ENCODE measurements at regions of chr18 and their contacts with region 1.

Region 1: GRCh38 chr18:11947214-11948191 is 33.8 kb upstream of the IMPA2 start:
- DNase-seq: peak; percentile 26 to 89 (median 78)
- H3K4me3 ChIP-seq: peak overlapping the region; percentile 40 to 79 (median 61)
- H3K27ac ChIP-seq: peak overlapping the region in 57 of 59 donors; percentile 10 to 96 (median 83)
- H3K27me3 ChIP-seq: no peaks in the 10 kb centered on the region
- CTCF ChIP-seq: peak in 15 of 56 donors; percentile 6 to 38 (median 16)

Region 2: DNA sequence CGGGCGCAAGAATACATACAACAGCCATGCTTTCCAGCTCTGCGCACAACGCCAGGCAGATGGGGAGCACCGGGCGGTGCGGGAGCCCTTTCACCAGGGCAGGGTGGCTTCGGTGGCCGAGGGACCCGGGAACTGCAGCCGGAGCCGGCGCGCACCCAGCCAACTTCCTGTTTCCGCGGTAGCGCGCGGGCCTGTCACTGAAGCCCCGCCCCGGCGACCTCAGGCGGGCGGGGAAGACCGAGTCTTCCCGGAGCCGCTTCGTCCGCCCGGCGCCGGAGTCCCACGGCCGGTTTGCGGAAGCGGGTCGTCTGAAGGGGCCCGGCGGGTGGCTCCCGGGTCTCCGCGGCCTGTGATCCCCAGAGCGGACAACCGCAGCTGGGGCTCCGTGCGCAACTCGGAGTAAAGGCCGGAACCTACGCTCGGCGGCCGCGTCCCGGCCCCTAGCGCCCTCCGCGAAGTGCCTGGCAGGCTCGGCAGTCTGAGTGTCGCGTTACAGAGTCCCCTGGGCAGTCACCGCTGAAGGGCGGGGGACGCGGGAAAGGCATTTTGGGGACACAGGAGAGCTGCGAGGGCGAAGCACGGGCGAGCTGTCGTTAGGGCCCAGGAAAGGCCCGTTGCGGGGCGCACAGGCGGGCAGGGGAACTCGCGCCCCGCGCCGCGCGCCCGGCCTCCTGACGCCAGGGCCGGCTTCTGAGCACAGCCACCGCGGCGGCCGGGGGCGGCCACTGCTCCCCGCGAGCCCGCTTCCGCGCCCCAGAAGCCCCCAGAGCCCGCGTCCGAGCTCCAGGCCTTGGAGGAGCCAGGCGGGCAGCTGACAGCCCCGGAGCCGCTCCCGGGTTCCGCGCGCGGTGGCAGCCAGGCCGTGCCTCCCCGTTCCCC is 39.1 kb before region 1 on chr18 and contains the start of gene MPPE1:
- intact Hi-C with region 1: no loop called
- DNase-seq: peak; percentile 73 to 91 (median 87)
- H3K4me3 ChIP-seq: peak within 1 kb of the TSS; percentile 46 to 94 (median 85)
- H3K27ac ChIP-seq: peak within 1 kb of the TSS; percentile 87 to 100 (median 98)
- H3K27me3 ChIP-seq: no peaks in the 10 kb centered on the region
- CTCF ChIP-seq: peak in 23 of 56 donors; percentile 2 to 53 (median 24)
- total RNA-seq, gene MPPE1: 28.8 to 68.7 (median 48.6) TPM

Region 3: DNA sequence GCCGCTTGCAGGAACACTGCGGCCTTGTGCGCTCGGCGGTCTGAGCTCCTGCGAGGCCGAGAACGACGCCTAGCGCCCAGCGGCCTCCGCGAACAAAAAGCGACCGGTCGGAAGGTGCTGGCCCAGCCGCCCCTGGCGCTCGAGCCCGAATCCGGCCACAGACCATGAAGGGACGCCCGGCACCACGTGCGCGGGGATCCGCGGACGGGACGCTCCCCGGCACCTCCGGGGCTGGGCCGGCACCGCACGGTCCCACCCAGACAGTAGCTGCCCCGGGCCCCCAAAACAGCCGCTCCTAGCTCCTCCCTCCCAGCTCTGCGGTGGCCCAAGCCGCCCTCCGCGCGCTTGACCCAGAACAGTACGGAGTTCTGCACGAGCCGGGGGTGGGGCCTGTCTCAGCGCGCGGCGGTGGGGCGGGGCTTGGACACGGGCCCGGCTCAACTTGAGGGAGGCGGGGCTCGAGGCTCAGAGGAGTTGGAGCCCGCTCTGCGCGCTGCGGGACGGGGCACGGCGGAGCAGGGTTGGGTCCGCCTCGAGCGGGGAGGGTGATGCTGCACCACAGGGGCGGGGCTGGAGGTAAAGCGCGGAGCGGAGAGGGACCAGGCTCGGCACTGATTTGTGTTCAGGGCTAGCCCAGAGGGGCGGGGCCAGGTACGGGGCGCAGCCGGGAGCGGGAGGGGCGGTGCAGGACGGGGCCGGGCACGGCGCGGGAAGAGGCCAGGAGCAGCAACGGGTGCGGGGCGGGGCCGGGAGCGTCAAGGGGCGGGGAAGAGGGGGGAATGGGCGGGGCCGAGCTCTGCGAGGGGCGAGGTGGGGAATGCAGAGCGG is 33.3 kb after region 1 on chr18:
- intact Hi-C with region 1: loop called in 1 of 2 experiments (anchors 5 kb)
- DNase-seq: peak; percentile 70 to 88 (median 78)
- H3K4me3 ChIP-seq: peak overlapping the region; percentile 56 to 90 (median 74)
- H3K27ac ChIP-seq: peak overlapping the region in 57 of 59 donors; percentile 13 to 90 (median 76)
- H3K27me3 ChIP-seq: peaks cover 0 to 14% (median 0%) of the 10 kb centered on the region in 45 donors
- CTCF ChIP-seq: peak in 18 of 56 donors; percentile 8 to 42 (median 23)

Region 4: DNA sequence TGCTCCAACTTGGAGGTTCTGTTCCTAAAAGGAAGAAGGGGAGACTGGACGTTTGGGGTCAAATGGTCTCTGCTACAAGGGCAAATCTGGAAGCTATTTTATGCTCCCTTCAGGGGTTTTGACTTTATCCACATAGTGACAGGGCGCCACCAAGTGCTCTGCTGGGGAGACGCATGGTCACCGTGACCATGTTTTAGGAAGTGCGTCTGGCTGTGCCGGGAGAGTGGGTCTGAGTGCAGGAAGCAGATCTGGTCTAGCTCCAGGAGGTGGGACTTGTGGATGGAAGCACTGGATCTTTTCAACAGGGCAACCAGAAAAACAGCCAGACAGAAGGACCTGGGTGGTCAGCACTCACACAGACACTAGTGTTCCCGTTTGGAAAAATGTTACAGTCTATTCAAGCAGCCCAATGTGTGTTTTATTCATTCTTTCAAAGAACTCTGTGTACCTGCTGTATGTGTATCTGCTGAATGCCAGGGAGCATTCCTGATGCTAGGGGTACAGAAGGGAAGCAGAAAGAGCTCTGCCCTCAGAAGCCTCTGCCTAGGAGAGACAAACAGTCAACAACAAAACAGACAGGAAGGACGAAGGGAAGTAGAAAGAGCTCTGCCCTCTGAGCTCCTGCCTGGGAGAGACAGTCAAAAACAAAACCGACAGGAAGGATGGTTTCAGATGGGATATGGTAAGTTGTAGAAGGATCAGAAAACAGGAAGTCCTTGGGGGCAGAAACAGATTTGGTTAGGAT is 48.1 kb after region 1 on chr18:
- intact Hi-C with region 1: loop called in 1 of 2 experiments (anchors 5 kb)
- DNase-seq: peak in 6 of 10 donors; percentile 54 to 69 (median 61)
- H3K4me3 ChIP-seq: peak overlapping the region in 1 of 59 donors; percentile 13
- H3K27ac ChIP-seq: peak overlapping the region in 15 of 59 donors; percentile 1 to 59 (median 29)
- H3K27me3 ChIP-seq: peaks cover 0 to 3% (median 0%) of the 10 kb centered on the region in 45 donors
- CTCF ChIP-seq: peak in 54 of 56 donors; percentile 41 to 78 (median 66)

Region 5: GRCh38 chr18:12031846-12032245 is 84.3 kb after region 1 on chr18:
- intact Hi-C with region 1: loop called in 1 of 2 experiments (anchors 5 kb)
- DNase-seq: no peak
- H3K4me3 ChIP-seq: no peak overlapping the region
- H3K27ac ChIP-seq: no peak overlapping the region
- H3K27me3 ChIP-seq: no peaks in the 10 kb centered on the region
- CTCF ChIP-seq: no peak

Region 6: GRCh38 chr18:12862467-12862866 is 915.0 kb after region 1 on chr18:
- intact Hi-C with region 1: no loop called
- DNase-seq: no peak
- H3K4me3 ChIP-seq: no peak overlapping the region
- H3K27ac ChIP-seq: no peak overlapping the region
- H3K27me3 ChIP-seq: no peaks in the 10 kb centered on the region
- CTCF ChIP-seq: no peak

Measured in dorsolateral prefrontal cortex (tissue), 120 donors.